Breast epithelium (tissue), 4 donors: ENCODE measurements at regions of chr1 and their contacts with region 1.

Region 1: DNA sequence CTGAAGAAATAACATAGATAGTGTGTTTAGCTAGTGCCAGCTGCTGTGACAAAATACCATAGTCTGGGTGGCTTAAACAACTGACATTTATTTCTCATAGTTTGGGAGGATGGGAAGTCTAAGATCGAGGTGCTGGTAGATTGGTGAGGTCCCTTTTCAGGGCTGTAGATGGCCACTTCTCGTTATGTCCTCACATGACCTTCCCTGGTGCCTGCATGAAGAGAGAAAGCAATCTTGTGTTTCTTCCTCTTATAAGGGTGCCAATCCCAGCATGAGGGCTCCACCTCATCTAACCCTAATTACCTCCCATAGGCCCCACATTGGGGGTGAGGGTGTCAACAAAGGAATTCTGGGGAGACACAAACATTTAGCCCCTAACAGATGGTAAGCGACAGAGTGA is 9.3 kb downstream of the MTARC2 start:
- DNase-seq: no peak
- H3K4me3 ChIP-seq: no peak overlapping the region
- H3K27ac ChIP-seq: no peak overlapping the region
- H3K4me1 ChIP-seq: no peaks in the 10 kb centered on the region
- H3K27me3 ChIP-seq: no peaks in the 10 kb centered on the region
- CTCF ChIP-seq: no peak
- POLR2A ChIP-seq: no peak

Region 2: DNA sequence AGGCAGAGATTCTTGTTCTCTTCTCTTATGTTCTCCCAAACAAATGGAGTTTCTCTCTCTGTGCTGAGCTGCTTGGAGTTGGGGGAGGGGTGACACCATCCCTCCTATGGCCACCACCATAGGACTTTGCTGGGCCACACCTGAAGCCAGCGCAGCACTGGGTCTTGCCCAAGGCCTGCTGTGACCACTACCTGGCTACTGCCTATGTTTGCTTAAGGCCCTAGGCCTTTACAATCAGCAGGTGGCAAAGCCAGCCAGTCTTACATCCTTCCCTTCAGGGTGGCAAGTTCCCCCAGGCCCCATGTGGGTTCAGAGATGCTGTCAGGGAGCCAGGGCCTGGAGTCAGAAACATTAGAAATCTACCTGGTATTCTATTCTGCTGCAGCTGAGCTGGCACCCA is 15.6 kb before region 1 on chr1:
- intact Hi-C with region 1: loop called (anchors 1 kb)
- DNase-seq: no peak
- H3K4me3 ChIP-seq: no peak overlapping the region
- H3K27ac ChIP-seq: no peak overlapping the region
- H3K4me1 ChIP-seq: no peaks in the 10 kb centered on the region
- H3K27me3 ChIP-seq: no peaks in the 10 kb centered on the region
- CTCF ChIP-seq: no peak
- POLR2A ChIP-seq: no peak

Region 3: GRCh38 chr1:220803401-220804201 is 46.2 kb after region 1 on chr1:
- intact Hi-C with region 1: no loop called
- DNase-seq: no peak
- H3K4me3 ChIP-seq: no peak overlapping the region
- H3K27ac ChIP-seq: no peak overlapping the region
- H3K4me1 ChIP-seq: no peaks in the 10 kb centered on the region
- H3K27me3 ChIP-seq: no peaks in the 10 kb centered on the region
- CTCF ChIP-seq: peak; percentile 17 to 62 (median 38)
- POLR2A ChIP-seq: no peak